GM12878 (cell line): ENCODE measurements at regions of chr16 and their contacts with region 1.

Region 1: GRCh38 chr16:89099905-89100304 is 6.3 kb downstream of the ACSF3 start:
- DNase-seq: no peak
- ATAC-seq: no peak
- H3K4me3 ChIP-seq: no peak overlapping the region
- H3K27ac ChIP-seq: no peak overlapping the region
- H3K4me1 ChIP-seq: peaks cover 36% of the 10 kb centered on the region
- H3K27me3 ChIP-seq: no peaks in the 10 kb centered on the region
- CTCF ChIP-seq: no peak
- EP300 ChIP-seq: no peak
- POLR2A ChIP-seq: no peak
- RAD21 ChIP-seq: no peak

Region 2: GRCh38 chr16:88870608-88871348 is 229.1 kb before region 1 on chr16:
- CTCF ChIA-PET with region 1: no interaction called
- POLR2A ChIA-PET with region 1: no interaction called
- RAD21 ChIA-PET with region 1: no interaction called
- SMC1A ChIA-PET with region 1: no interaction called
- in situ Hi-C with region 1: no loop called
- intact Hi-C with region 1: no loop called
- DNase-seq: no peak
- ATAC-seq: peak; percentile 66
- H3K4me3 ChIP-seq: 0 out of 2 replicates have a peak overlapping the region, but pooled peaks have one; percentile 23
- H3K27ac ChIP-seq: no peak overlapping the region
- H3K4me1 ChIP-seq: no peaks in the 10 kb centered on the region; the same call in 1 of the 2 replicates
- H3K27me3 ChIP-seq: peaks cover 4 to 6% of the 10 kb centered on the region in 2 experiments
- CTCF ChIP-seq: no peak
- EP300 ChIP-seq: no peak
- POLR2A ChIP-seq: 0 out of 2 replicates have a peak, but pooled peaks have one; percentile 11
- RAD21 ChIP-seq: no peak

Region 3: GRCh38 chr16:88977018-88977811 is 122.7 kb before region 1 on chr16 and contains the start of gene CBFA2T3:
- CTCF ChIA-PET with region 1: interaction called, 5 read pairs
- POLR2A ChIA-PET with region 1: interaction called, 20 read pairs
- RAD21 ChIA-PET with region 1: interaction called, 20 read pairs
- SMC1A ChIA-PET with region 1: interaction called, 10 read pairs
- in situ Hi-C with region 1: no loop called
- intact Hi-C with region 1: no loop called
- DNase-seq: no peak
- ATAC-seq: peak; percentile 32
- H3K4me3 ChIP-seq: peak within 1 kb of the TSS; percentile 93
- H3K27ac ChIP-seq: peak within 1 kb of the TSS; percentile 98
- H3K4me1 ChIP-seq: peaks cover 51% of the 10 kb centered on the region
- H3K27me3 ChIP-seq: no peaks in the 10 kb centered on the region
- CTCF ChIP-seq: no peak
- EP300 ChIP-seq: no peak
- POLR2A ChIP-seq: no peak
- RAD21 ChIP-seq: no peak
- polyA plus RNA-seq, gene CBFA2T3: 0.69 to 1.5 TPM

Region 4: GRCh38 chr16:89031715-89032659 is 67.9 kb before region 1 on chr16:
- CTCF ChIA-PET with region 1: no interaction called
- POLR2A ChIA-PET with region 1: no interaction called
- RAD21 ChIA-PET with region 1: no interaction called
- SMC1A ChIA-PET with region 1: interaction called, 6 read pairs
- in situ Hi-C with region 1: no loop called
- intact Hi-C with region 1: loop called (anchors 5 kb)
- DNase-seq: peak; percentile 71
- ATAC-seq: peak; percentile 97
- H3K4me3 ChIP-seq: peak overlapping the region; percentile 0; the same call in 1 of the 2 replicates
- H3K27ac ChIP-seq: peak overlapping the region; percentile 76
- H3K4me1 ChIP-seq: peaks cover 12% of the 10 kb centered on the region
- H3K27me3 ChIP-seq: no peaks in the 10 kb centered on the region
- CTCF ChIP-seq: no peak
- EP300 ChIP-seq: no peak
- POLR2A ChIP-seq: no peak
- RAD21 ChIP-seq: peak; percentile 15; the same call in 1 of the 2 replicates